ENCODE measurements at regions of chr11 and their contacts with region 1.

Region 1: GRCh38 chr11:15923183-15923582 is 433.2 kb downstream of the SOX6 start:
- DNase-seq: peak in 2 of 4 experiments; percentile 31 to 42
- ATAC-seq: peak; percentile 83
- H3K4me3 ChIP-seq: no peak overlapping the region
- H3K27ac ChIP-seq: no peak overlapping the region
- H3K4me1 ChIP-seq: no peaks in the 10 kb centered on the region
- H3K27me3 ChIP-seq: peaks cover 3 to 13% of the 10 kb centered on the region in 2 experiments; a peak in 3 of 5 replicates
- CTCF ChIP-seq: peak; percentile 45 to 59 (median 48)
- EP300 ChIP-seq: no peak
- POLR2A ChIP-seq: no peak
- RAD21 ChIP-seq: peak; percentile 64

Region 2: DNA sequence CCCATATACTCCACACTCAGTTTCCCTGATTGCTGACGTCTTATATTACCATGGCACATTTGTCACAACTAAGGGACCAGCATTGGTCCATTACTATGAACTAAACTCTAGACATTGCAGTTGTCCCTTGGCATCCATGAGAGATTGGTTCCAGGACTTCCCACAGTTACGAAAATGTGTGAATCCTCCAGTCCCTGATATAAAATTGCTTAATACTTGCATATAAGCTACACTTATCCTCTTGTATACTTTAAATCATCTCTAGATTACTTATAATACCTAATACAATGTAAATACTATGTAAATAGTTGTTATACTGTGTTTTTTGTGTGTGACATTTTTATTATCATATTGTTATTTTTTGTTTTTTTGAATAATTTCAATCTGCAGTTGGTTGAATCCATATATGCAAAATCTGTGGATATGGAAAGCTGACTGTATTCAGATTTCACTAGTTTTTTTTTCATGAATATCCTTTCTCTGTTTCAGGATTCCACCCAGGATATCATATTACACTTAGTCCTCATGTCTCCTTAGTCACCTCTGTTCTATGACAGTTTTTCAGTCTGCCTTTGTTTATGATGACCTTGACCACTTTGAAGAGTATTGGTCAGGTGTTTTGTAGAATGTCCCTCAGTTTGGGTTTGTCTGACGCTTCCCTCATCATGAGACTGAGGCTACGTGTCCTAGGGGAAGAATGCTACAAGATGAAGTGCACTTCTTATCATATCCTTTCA is 753.2 kb before region 1 on chr11:
- CTCF ChIA-PET with region 1: no interaction called
- POLR2A ChIA-PET with region 1: no interaction called
- in situ Hi-C with region 1: no loop called
- intact Hi-C with region 1: no loop called
- DNase-seq: no peak
- ATAC-seq: no peak
- H3K4me3 ChIP-seq: no peak overlapping the region
- H3K27ac ChIP-seq: no peak overlapping the region
- H3K4me1 ChIP-seq: no peaks in the 10 kb centered on the region
- H3K27me3 ChIP-seq: no peaks in the 10 kb centered on the region
- CTCF ChIP-seq: no peak
- EP300 ChIP-seq: no peak
- POLR2A ChIP-seq: no peak
- RAD21 ChIP-seq: no peak

Region 3: GRCh38 chr11:15730617-15731385 is 192.4 kb before region 1 on chr11:
- CTCF ChIA-PET with region 1: no interaction called
- POLR2A ChIA-PET with region 1: no interaction called
- in situ Hi-C with region 1: no loop called
- intact Hi-C with region 1: no loop called
- DNase-seq: no peak
- ATAC-seq: no peak
- H3K4me3 ChIP-seq: no peak overlapping the region
- H3K27ac ChIP-seq: no peak overlapping the region
- H3K4me1 ChIP-seq: no peaks in the 10 kb centered on the region
- H3K27me3 ChIP-seq: no peaks in the 10 kb centered on the region; a peak in 1 of 5 replicates
- CTCF ChIP-seq: no peak
- EP300 ChIP-seq: no peak
- POLR2A ChIP-seq: no peak
- RAD21 ChIP-seq: no peak

Region 4: DNA sequence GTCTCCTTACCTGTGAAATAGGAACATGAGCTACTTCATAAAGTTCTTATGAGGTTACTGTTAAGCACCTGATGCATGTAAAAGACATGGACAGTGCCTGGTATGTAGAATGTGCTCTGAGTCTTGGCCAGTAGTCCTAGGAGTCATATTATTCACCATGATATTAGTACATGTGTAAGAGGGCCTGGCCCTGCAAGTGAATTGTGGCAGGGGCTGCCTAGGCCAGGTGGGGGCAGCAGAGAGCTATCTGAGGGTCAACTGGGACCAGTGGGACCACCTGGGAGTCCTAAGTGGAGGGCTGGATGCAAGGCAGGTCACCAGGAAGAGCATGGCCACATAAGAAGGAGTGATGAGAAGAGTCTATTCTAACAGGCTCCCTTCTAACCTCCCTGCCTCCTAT is 96.4 kb before region 1 on chr11:
- CTCF ChIA-PET with region 1: no interaction called
- POLR2A ChIA-PET with region 1: interaction called, 4 read pairs
- in situ Hi-C with region 1: no loop called
- intact Hi-C with region 1: loop called (anchors 2 kb)
- DNase-seq: peak; percentile 58 to 68 (median 67)
- ATAC-seq: peak; percentile 97
- H3K4me3 ChIP-seq: no peak overlapping the region
- H3K27ac ChIP-seq: no peak overlapping the region
- H3K4me1 ChIP-seq: no peaks in the 10 kb centered on the region
- H3K27me3 ChIP-seq: peaks cover 4 to 7% of the 10 kb centered on the region in 2 experiments; a peak in 2 of 5 replicates
- CTCF ChIP-seq: peak; percentile 71 to 88 (median 75)
- EP300 ChIP-seq: no peak
- POLR2A ChIP-seq: no peak
- RAD21 ChIP-seq: peak; percentile 44 to 75

Region 5: DNA sequence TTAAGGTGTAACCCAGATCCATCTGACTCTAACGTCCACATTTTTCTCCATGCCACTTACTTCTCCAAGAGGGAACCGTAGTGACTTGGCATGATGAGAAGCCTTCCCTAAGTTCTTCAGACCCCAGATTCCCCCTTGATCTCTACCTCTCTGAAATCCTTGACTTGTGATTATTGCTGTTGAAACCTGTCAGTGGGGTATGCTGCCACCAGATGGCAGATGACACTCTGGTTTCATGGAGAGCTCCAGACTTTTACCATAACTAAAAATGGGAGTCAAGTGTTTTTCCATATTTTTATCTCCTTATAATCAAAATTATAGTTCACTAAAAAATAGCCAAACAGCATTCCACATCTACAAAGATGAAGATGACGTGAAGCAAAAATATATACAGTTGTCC is 71.0 kb before region 1 on chr11:
- CTCF ChIA-PET with region 1: interaction called, 7 read pairs
- POLR2A ChIA-PET with region 1: no interaction called
- in situ Hi-C with region 1: no loop called
- intact Hi-C with region 1: loop called (anchors 1 kb)
- DNase-seq: peak; percentile 14 to 50 (median 24)
- ATAC-seq: peak; percentile 53; the same call in 1 of the 3 replicates
- H3K4me3 ChIP-seq: no peak overlapping the region
- H3K27ac ChIP-seq: no peak overlapping the region
- H3K4me1 ChIP-seq: no peaks in the 10 kb centered on the region
- H3K27me3 ChIP-seq: peaks cover 0 to 10% of the 10 kb centered on the region in 2 experiments; a peak in 4 of 5 replicates
- CTCF ChIP-seq: peak; percentile 49 to 71 (median 64)
- EP300 ChIP-seq: no peak
- POLR2A ChIP-seq: no peak
- RAD21 ChIP-seq: peak; percentile 79 to 80

Measured in K562 (cell line).